Aorta (tissue), 5 donors: ENCODE measurements at regions of chr1 and their contacts with region 1.

Region 1: DNA sequence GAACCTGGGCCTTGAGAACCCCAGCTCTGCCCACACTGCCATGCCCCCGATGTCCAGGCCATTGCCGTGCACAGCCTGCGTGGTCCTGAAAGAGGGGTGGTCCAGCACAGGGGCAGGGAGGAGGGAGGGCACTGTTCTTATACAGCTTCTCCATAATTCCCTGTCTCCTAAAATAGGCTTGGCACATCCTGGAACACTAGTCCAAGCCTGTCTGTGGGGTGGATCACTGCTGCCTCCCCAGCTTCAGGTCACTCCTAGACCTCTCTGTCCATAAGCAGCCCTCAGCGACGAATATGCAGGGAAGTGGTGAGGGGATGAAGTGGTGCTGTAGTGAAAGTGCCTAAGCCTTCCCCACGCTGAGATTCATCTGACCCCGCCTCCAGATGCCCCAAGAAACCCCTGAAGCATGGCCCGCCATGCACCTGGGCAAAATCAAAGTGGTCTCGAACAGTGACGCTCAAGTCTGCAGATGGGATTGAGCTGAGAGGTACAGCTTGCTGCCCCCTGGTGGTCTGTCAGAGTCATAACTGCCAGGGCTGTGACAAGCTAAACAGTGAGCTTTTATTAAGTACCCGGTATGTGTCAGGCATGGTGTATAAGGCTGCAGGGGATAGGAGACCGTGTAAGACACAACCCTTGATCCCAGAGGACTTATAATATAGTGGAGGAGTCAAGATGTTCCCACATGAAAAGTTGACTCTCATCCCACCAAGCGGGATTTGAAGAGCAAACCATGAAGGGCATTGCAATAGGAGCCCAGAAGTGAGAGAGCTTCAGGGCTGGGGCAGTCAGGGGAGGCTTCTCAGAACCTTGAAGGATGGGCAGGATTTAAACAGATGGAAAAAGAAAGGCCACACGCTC is 66.6 kb downstream of the FAM163A start:
- DNase-seq: peak in 1 of 2 donors; percentile 60
- ATAC-seq: peak; percentile 70
- H3K4me3 ChIP-seq: no peak overlapping the region
- H3K27ac ChIP-seq: no peak overlapping the region
- H3K4me1 ChIP-seq: no peaks in the 10 kb centered on the region
- H3K27me3 ChIP-seq: no peaks in the 10 kb centered on the region

Region 2: GRCh38 chr1:179194068-179194537 is 615.6 kb before region 1 on chr1:
- intact Hi-C with region 1: no loop called
- DNase-seq: no peak
- ATAC-seq: no peak
- H3K4me3 ChIP-seq: no peak overlapping the region
- H3K27ac ChIP-seq: no peak overlapping the region
- H3K4me1 ChIP-seq: no peaks in the 10 kb centered on the region
- H3K27me3 ChIP-seq: no peaks in the 10 kb centered on the region

Region 3: DNA sequence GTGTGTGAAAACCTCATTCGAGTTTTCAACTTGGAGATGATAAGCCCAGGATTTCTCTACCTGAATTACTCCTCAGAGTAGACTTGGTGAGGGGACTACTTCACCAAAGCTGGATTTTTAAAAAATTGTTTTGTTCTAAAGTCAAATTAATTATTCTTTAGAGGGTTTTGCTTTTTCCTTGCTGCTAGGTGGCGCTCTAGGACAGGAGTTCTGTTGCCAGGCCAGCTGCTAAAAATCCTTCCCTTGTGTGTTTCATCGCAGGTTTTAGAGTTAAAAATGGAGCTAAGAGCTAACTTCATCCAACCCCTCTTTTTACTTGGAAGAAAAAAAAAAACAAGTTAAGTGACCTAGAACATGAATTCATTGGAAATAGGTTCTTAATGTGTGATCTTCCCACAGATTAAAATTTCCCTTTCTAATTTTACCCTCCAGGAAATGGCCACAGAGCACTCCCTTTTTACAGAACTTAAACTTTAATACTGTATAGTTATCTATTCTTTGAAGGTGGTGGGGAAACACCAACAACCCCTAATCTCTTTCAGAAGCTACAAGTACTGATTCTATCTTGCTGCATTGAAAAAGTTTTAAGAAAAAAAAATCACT is 103.3 kb before region 1 on chr1:
- intact Hi-C with region 1: loop called (anchors 1 to 2 kb)
- DNase-seq: peak in 1 of 2 donors; percentile 52
- ATAC-seq: no peak
- H3K4me3 ChIP-seq: no peak overlapping the region
- H3K27ac ChIP-seq: no peak overlapping the region
- H3K4me1 ChIP-seq: no peaks in the 10 kb centered on the region
- H3K27me3 ChIP-seq: peaks cover 0 to 2% of the 10 kb centered on the region in 2 donors

Region 4: GRCh38 chr1:179831852-179832699 is 22.3 kb after region 1 on chr1:
- intact Hi-C with region 1: no loop called
- DNase-seq: no peak
- ATAC-seq: no peak
- H3K4me3 ChIP-seq: no peak overlapping the region
- H3K27ac ChIP-seq: no peak overlapping the region
- H3K4me1 ChIP-seq: no peaks in the 10 kb centered on the region
- H3K27me3 ChIP-seq: no peaks in the 10 kb centered on the region

Region 5: DNA sequence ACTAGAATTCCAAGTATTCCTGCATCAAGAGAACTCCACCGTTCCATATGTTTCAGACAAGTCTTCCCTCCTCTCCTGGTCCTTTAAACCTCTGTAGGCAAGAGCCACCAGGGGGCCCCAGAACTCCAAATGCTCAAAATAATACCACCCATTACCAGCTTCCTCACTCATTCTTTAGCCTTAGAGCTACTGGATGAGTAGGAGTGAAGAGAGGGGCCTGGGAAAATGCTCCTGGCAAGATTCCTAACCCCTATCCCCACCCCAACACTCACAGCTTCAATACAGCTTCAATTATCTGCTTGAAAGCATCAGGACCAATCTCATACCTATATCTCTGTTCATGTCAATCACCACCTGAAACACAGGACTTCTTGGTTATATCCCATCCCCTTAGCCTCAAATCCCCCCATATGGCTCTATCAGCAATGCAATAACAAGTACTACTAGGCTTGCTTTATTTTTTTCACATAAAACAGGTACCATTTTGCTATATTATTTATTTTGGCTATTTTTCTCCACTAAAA is 58.1 kb after region 1 on chr1:
- intact Hi-C with region 1: no loop called
- DNase-seq: no peak
- ATAC-seq: no peak
- H3K4me3 ChIP-seq: no peak overlapping the region
- H3K27ac ChIP-seq: no peak overlapping the region
- H3K4me1 ChIP-seq: no peaks in the 10 kb centered on the region
- H3K27me3 ChIP-seq: no peaks in the 10 kb centered on the region